SK-N-SH (cell line): ENCODE measurements at regions of chr20 and their contacts with region 1.

Region 1: DNA sequence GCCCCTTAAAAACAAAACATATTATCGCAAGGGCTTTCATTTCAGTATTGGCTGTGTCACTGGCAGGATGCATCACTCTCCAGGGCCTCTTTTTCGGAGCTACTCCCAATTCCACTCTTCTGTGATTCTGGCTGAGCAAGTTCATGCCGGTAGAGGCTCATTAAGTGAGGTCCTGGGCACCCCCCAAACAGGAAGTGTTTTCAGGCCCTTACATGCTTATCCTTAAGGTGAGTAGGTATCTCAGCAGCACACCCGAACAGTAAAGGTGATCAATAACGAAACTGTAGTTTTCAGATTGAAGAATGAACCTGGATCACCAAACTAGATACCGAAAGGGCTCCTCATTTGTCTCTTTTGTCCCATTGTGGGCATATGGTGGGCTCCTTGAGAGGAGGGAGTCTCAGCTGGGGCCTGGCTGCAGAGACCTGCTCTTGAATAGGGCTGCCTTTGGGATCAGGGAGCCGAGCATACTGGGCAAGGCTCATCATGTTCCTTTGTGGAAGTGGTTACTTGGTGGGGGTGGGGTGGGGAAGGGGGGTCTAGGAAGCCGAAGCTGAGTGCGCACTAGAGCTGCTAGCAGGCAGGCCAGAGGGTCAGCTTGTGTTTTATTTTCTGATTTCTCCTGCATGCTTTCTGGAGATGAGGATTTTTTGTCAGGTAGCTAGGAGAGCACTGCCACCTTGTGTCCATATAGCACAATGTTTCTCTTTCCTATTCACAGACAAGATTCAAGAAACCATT is 65.2 kb downstream of the CDS2 start:
- DNase-seq: peak; percentile 74
- H3K4me3 ChIP-seq: no peak overlapping the region
- H3K27ac ChIP-seq: peak overlapping the region in 1 of 2 experiments; percentile 25; a peak in 1 of 4 replicates
- H3K4me1 ChIP-seq: no peaks in the 10 kb centered on the region; a peak in 1 of 4 replicates
- H3K27me3 ChIP-seq: no peaks in the 10 kb centered on the region
- CTCF ChIP-seq: peak; percentile 78
- EP300 ChIP-seq: no peak
- RAD21 ChIP-seq: peak; percentile 97

Region 2: GRCh38 chr20:5100684-5101347 is 91.2 kb before region 1 on chr20:
- CTCF ChIA-PET with region 1: interaction called, 16 read pairs
- POLR2A ChIA-PET with region 1: no interaction called
- DNase-seq: peak; percentile 72
- H3K4me3 ChIP-seq: no peak overlapping the region; a peak in 1 of 4 replicates
- H3K27ac ChIP-seq: no peak overlapping the region
- H3K4me1 ChIP-seq: no peaks in the 10 kb centered on the region
- H3K27me3 ChIP-seq: no peaks in the 10 kb centered on the region
- CTCF ChIP-seq: peak; percentile 93
- EP300 ChIP-seq: no peak
- RAD21 ChIP-seq: peak; percentile 79

Region 3: GRCh38 chr20:5119435-5120188 is 72.4 kb before region 1 on chr20 and contains the start of gene PCNA:
- CTCF ChIA-PET with region 1: interaction called, 115 read pairs
- POLR2A ChIA-PET with region 1: no interaction called
- DNase-seq: peak; percentile 96
- H3K4me3 ChIP-seq: peak within 1 kb of the TSS; percentile 93
- H3K27ac ChIP-seq: peak within 1 kb of the TSS; percentile 76 to 97
- H3K4me1 ChIP-seq: peaks cover 7 to 16% of the 10 kb centered on the region in 2 experiments; a peak in 3 of 4 replicates
- H3K27me3 ChIP-seq: no peaks in the 10 kb centered on the region
- CTCF ChIP-seq: no peak
- EP300 ChIP-seq: no peak
- RAD21 ChIP-seq: no peak
- polyA plus RNA-seq, gene PCNA: 185 and 204 TPM in 2 replicates

Region 4: DNA sequence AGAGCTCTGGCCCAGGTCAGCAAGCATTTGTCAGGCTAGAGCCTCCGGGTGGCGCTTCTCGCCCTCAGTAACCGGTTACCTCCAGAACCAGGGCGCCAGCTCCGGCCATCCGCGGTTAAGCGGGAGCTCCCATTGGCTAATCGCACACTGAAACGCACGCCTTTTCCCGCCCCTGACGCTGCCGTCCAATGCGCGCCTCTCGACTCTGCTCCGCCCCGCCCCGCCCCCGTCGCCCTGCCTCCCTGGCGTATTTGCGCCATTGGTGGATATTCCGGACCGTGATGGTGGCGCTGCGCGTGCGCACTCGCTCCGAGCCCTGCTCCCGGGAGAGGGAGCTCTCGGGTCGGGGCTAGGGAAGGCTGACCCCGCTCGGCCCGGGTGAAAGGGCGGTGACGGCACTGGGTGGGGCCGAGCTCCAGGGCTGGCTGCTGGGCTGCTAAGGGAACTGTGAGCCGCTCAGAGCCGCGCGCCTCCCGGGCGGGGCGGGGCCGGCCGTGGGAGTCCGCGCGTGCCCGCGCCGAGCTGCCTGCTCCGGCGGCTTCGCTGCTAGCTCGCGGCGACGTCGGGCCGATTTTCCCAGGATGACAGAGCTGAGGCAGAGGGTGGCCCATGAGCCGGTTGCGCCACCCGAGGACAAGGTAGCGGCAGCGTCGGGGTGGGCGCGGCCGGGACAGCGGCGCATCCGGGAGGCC is 65.3 kb before region 1 on chr20 and contains the start of gene CDS2:
- CTCF ChIA-PET with region 1: interaction called, 115 read pairs
- POLR2A ChIA-PET with region 1: interaction called, 11 read pairs
- DNase-seq: peak; percentile 99
- H3K4me3 ChIP-seq: peak within 1 kb of the TSS; percentile 78 to 79
- H3K27ac ChIP-seq: peak within 1 kb of the TSS; percentile 70 to 83
- H3K4me1 ChIP-seq: peaks cover 4 to 7% of the 10 kb centered on the region in 2 experiments; a peak in 1 of 4 replicates
- H3K27me3 ChIP-seq: no peaks in the 10 kb centered on the region
- CTCF ChIP-seq: peak; percentile 64
- EP300 ChIP-seq: no peak
- RAD21 ChIP-seq: peak; percentile 71
- polyA plus RNA-seq, gene CDS2: 13.9 and 22.7 TPM in 2 replicates

Region 5: GRCh38 chr20:5143851-5144250 is 48.1 kb before region 1 on chr20:
- CTCF ChIA-PET with region 1: interaction called, 10 read pairs
- POLR2A ChIA-PET with region 1: no interaction called
- DNase-seq: no peak
- H3K4me3 ChIP-seq: no peak overlapping the region
- H3K27ac ChIP-seq: no peak overlapping the region
- H3K4me1 ChIP-seq: no peaks in the 10 kb centered on the region
- H3K27me3 ChIP-seq: no peaks in the 10 kb centered on the region
- CTCF ChIP-seq: no peak
- EP300 ChIP-seq: no peak
- RAD21 ChIP-seq: no peak

Region 6: GRCh38 chr20:5168651-5169396 is 23.2 kb before region 1 on chr20:
- CTCF ChIA-PET with region 1: interaction called, 15 read pairs
- POLR2A ChIA-PET with region 1: no interaction called
- DNase-seq: no peak
- H3K4me3 ChIP-seq: no peak overlapping the region
- H3K27ac ChIP-seq: no peak overlapping the region; a peak in 1 of 4 replicates
- H3K4me1 ChIP-seq: peaks cover 17 to 40% of the 10 kb centered on the region in 2 experiments; a peak in 3 of 4 replicates
- H3K27me3 ChIP-seq: no peaks in the 10 kb centered on the region
- CTCF ChIP-seq: no peak
- EP300 ChIP-seq: no peak
- RAD21 ChIP-seq: no peak

Region 7: GRCh38 chr20:5181956-5182355 is 10.0 kb before region 1 on chr20:
- CTCF ChIA-PET with region 1: interaction called, 18 read pairs
- POLR2A ChIA-PET with region 1: no interaction called
- DNase-seq: no peak
- H3K4me3 ChIP-seq: no peak overlapping the region
- H3K27ac ChIP-seq: no peak overlapping the region
- H3K4me1 ChIP-seq: peaks cover 0 to 6% of the 10 kb centered on the region in 2 experiments; a peak in 1 of 4 replicates
- H3K27me3 ChIP-seq: no peaks in the 10 kb centered on the region
- CTCF ChIP-seq: no peak
- EP300 ChIP-seq: no peak
- RAD21 ChIP-seq: no peak